ENCODE measurements at regions of chr3 and their contacts with region 1.

Region 1: DNA sequence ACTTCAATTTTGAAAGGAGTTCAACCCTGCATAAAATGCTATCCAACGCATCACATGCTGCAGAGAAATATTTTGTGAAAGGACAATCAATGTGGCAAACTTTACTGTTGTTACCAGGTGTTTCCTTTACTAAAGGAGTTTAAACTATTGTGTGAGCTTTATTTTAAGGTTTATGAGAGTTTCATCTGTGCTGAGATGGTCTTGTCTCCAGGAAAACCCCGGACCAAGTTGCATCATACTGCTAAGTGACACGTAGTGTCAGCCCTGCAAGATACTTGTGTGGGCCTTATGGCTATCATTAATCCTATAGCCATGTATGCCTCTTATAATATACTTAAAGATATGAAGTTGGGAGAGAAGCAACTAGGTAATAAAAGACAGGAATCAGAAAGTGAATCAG is 94.5 kb upstream of the EPHA6 start:
- DNase-seq: no peak
- ATAC-seq: no peak

Region 2: DNA sequence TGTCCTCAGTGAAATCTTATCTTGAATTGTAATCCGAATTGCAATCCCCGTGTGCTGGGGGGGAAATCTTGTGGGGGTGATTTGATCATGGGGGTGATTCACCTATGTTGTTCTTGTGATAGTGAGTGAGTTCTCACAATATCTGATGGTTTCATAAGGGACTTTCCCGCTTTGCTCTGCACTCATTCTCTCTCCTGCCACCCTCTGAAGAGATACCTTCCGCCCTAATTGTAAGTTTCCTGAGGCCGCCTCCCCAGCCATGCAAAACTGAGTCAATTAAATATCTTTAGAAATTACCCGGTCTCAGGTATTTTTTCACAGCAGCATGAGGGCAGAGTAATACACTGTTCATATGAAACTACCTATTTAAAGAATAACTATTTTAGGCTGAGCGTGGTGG is 209.6 kb before region 1 on chr3:
- intact Hi-C with region 1: no loop called
- DNase-seq: no peak
- ATAC-seq: no peak

Region 3: DNA sequence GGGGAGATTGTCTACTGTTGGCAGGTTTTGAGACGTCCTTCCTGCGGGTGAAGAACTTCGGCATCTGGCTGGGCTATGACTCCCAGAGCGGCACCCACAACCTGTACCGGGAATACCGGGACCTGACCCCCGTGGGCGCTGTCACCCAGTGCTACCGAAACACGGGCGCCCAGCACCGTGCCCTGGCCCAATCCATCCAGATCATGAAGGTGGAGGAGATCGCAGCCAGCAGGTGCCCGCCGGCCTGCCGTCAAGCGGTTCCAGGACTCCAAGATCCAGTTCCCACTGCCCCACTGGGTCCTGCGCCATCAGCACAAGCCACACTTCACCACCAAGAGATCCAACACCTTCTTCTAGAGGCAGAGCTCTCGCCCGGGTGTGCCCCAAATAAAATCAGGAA is 100.4 kb before region 1 on chr3:
- intact Hi-C with region 1: loop called in 1 of 2 experiments (anchors 10 kb)
- DNase-seq: no peak
- ATAC-seq: no peak

Measured in left colon (tissue), 2 donors.